ENCODE measurements at regions of chr6 and their contacts with region 1.

Region 1: GRCh38 chr6:47780510-47781356 is 1.1 kb upstream of the OPN5 start:
- DNase-seq: peak; percentile 57
- H3K4me3 Mint-ChIP-seq: no peak overlapping the region
- H3K27ac Mint-ChIP-seq: no peak overlapping the region
- H3K4me1 Mint-ChIP-seq: peaks cover 5% of the 10 kb centered on the region
- H3K27me3 Mint-ChIP-seq: peaks cover 6% of the 10 kb centered on the region

Region 2: DNA sequence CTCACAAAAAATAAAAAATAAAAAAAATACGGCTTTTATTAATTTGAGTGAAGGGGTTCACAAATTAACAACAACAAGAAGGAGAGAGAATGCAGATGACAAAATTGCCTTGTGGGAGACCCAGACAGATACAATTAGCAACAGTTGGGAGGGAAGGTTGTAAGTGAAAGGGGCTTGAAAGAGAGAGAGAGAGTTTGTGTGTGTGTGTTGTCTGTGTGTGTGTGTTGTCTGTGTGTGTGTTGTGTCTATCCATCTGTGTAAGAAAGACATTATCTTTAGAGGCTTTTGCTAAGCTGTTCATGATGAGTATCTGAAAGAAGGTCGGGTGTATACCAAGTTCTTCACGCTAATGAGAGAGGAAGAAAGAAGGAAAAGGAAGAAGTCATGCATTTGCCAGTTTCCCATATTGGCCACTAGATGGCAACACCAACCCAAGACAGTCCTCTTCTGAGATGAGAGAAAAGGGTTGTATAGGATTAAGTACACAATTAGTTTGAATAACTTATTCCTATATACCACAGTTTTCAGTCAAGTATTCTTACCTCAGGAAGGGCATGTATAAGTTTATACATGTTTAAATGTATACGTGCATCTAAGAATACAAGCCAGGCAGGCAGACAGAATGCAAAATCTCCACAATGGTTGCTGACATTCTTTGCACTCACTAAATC is 366.8 kb before region 1 on chr6:
- CTCF ChIA-PET with region 1: interaction called, 18 read pairs
- intact Hi-C with region 1: loop called (anchors 1 kb)
- DNase-seq: peak; percentile 55
- H3K4me3 Mint-ChIP-seq: peak overlapping the region; percentile 63
- H3K27ac Mint-ChIP-seq: peak overlapping the region; percentile 46
- H3K4me1 Mint-ChIP-seq: peaks cover 15% of the 10 kb centered on the region
- H3K27me3 Mint-ChIP-seq: no peaks in the 10 kb centered on the region

Region 3: DNA sequence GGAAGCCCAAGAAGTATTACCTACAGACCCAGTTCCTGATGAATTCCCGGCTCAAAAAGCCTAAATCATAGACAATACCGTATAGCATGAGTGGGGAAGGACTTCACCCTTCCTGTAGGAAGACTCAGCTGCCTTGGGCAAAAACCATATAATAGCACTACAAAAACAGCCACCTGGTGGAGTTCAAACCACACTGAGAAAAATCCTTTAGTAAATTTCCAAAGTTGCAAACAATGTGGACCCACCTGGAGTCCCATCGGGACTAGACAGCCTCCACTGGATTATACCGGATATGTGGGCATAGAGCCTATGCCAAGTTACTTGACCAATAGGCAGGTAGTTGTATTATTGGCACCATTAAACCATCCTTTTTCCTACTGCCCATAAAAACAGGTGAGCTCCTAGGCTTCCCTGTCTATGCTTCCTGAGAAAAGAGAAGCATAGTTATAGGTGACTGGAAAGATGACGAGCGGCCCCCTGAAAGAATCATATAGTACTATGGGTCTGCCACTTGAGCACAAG is 134.1 kb before region 1 on chr6:
- CTCF ChIA-PET with region 1: no interaction called
- intact Hi-C with region 1: loop called (anchors 5 kb)
- DNase-seq: no peak
- H3K4me3 Mint-ChIP-seq: no peak overlapping the region
- H3K27ac Mint-ChIP-seq: no peak overlapping the region
- H3K4me1 Mint-ChIP-seq: no peaks in the 10 kb centered on the region
- H3K27me3 Mint-ChIP-seq: peaks cover 4% of the 10 kb centered on the region

Region 4: GRCh38 chr6:47741807-47742206 is 38.9 kb before region 1 on chr6:
- CTCF ChIA-PET with region 1: interaction called, 6 read pairs
- intact Hi-C with region 1: loop called (anchors 2 kb)
- DNase-seq: peak; percentile 41
- H3K4me3 Mint-ChIP-seq: no peak overlapping the region
- H3K27ac Mint-ChIP-seq: peak overlapping the region; percentile 59
- H3K4me1 Mint-ChIP-seq: peaks cover 18% of the 10 kb centered on the region
- H3K27me3 Mint-ChIP-seq: peaks cover 8% of the 10 kb centered on the region

Measured in activated naive CD4-positive, alpha-beta T cell treated with anti-CD3 and anti-CD28 coated beads for 36 hours (primary cell).